SK-N-SH (cell line): ENCODE measurements at regions of chr7 and their contacts with region 1.

Region 1: DNA sequence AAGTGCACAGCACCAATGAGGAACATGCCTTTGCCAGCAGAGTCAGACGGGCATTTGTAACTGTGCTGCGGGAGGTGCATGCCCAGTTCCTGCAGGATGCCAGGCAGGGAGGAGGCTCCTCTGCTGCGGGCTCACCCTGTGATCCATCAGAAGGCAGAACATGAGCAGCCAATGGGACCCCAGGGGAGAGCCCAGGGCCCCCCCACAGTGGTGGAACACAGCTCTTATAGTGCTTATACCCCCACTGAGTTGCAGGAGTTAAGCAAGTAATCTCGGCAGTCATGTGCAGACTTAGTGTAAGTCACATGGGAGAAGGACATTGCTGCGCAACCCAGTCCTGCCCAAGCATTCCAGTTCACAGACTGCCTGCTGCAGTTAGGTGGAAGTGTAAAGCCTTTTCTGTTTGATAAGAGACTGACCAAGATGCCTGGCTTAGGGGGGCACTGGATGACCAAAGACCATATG is 120.3 kb upstream of the TMEM106B start:
- DNase-seq: peak; percentile 32
- H3K4me3 ChIP-seq: peak overlapping the region in 1 of 2 experiments; percentile 25; a peak in 1 of 4 replicates
- H3K27ac ChIP-seq: peak overlapping the region in 1 of 2 experiments; percentile 94; a peak in 2 of 4 replicates
- H3K4me1 ChIP-seq: peaks cover 0 to 30% of the 10 kb centered on the region in 2 experiments; a peak in 2 of 4 replicates
- H3K27me3 ChIP-seq: no peaks in the 10 kb centered on the region
- CTCF ChIP-seq: no peak
- EP300 ChIP-seq: no peak
- RAD21 ChIP-seq: no peak

Region 2: GRCh38 chr7:12211054-12211710 is 120.4 kb after region 1 on chr7 and contains the start of gene TMEM106B:
- CTCF ChIA-PET with region 1: interaction called, 4 read pairs
- POLR2A ChIA-PET with region 1: interaction called, 12 read pairs
- DNase-seq: peak; percentile 98
- H3K4me3 ChIP-seq: peak within 1 kb of the TSS; percentile 73 to 98
- H3K27ac ChIP-seq: peak within 1 kb of the TSS; percentile 68 to 97
- H3K4me1 ChIP-seq: peaks cover 0 to 16% of the 10 kb centered on the region in 2 experiments; a peak in 2 of 4 replicates
- H3K27me3 ChIP-seq: 0 out of 2 replicates have a peak, but pooled peaks cover 11% of the 10 kb centered on the region
- CTCF ChIP-seq: no peak
- EP300 ChIP-seq: peak in 1 of 2 experiments; percentile 37; a peak in 1 of 4 replicates
- RAD21 ChIP-seq: peak; percentile 4; the same call in 1 of the 2 replicates
- polyA plus RNA-seq, gene TMEM106B: 20.4 and 27.3 TPM in 2 replicates

Region 3: DNA sequence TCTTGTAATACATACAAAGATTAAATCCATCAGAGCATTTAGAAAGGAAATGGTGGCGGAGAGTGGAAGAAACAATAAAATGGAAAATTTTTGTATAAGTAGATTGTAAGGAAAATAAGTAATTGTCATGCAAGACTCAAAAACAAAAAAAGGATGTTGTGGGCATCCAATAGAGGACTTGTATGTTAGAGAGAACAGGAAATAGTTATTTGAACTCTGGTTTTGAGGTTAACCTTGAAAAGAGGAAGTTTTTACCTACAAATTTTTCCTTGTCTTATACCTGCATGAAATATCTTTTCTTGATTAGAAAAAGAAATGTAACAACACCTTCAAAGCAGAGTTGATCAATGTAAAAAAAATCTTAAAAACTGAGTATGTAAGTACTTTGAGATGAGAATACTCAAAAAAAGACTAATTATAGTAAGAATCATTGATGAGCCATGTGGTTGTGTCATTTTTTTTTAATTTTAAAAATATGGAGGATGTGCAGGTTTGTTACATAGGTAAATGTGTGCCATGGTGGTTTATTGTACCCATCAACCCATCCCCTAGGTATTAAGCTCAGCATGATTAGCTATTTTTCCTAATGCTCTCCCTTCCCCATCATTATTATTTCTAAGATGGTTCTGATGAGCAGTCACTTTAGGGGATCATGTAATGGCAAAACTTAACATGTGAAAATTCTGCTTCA is 132.2 kb after region 1 on chr7:
- CTCF ChIA-PET with region 1: no interaction called
- POLR2A ChIA-PET with region 1: no interaction called
- DNase-seq: no peak
- H3K4me3 ChIP-seq: no peak overlapping the region
- H3K27ac ChIP-seq: no peak overlapping the region
- H3K4me1 ChIP-seq: peaks cover 0 to 3% of the 10 kb centered on the region in 2 experiments; a peak in 1 of 4 replicates
- H3K27me3 ChIP-seq: no peaks in the 10 kb centered on the region
- CTCF ChIP-seq: no peak
- EP300 ChIP-seq: no peak
- RAD21 ChIP-seq: no peak